IMR-90 (cell line): ENCODE measurements at regions of chr17 and their contacts with region 1.

Region 1: DNA sequence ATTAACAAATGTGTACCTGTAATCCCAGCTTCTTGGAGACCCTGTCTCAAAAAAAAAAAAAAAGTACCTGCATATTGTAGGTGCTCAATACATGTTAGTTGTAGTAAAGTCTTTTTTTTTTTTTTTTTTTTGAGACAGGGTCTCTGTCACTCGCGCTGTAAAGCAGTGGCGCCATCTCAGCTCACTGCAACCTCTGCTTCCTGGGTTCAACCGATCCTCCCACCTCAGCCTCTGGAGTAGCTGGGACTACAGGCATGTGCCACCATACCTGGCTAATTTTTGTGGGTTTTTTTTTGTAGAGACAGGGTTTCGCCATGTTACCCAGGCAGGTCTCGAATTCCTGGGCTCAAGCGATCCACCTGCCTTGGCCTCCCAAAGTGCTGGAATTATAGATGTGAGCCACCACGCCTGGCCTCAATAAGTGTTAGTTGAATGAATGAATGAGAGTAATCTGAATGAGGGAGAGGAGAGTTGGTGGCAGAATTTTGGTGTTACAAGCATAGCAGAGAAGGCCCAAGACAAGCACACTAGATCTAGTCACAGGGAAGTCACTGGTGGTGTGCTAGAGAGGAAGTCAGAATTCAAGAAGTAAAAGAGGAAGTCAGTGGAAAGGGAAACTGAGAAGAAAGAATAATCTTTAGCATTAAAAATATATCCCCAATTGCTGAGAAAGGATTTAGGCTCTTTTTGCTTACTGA is 9.4 kb upstream of the MYL4 start:
- DNase-seq: no peak
- ATAC-seq: no peak
- H3K4me3 ChIP-seq: no peak overlapping the region
- H3K27ac ChIP-seq: no peak overlapping the region
- H3K4me1 ChIP-seq: peaks cover 5% of the 10 kb centered on the region
- H3K27me3 ChIP-seq: no peaks in the 10 kb centered on the region
- CTCF ChIP-seq: no peak
- POLR2A ChIP-seq: no peak
- RAD21 ChIP-seq: no peak

Region 2: GRCh38 chr17:47210779-47211178 is 11.0 kb after region 1 on chr17:
- CTCF ChIA-PET with region 1: no interaction called
- POLR2A ChIA-PET with region 1: no interaction called
- dilution Hi-C with region 1: no loop called
- in situ Hi-C with region 1: no loop called
- intact Hi-C with region 1: loop called (anchors 1 kb)
- DNase-seq: no peak
- ATAC-seq: no peak
- H3K4me3 ChIP-seq: no peak overlapping the region
- H3K27ac ChIP-seq: no peak overlapping the region
- H3K4me1 ChIP-seq: peaks cover 10% of the 10 kb centered on the region
- H3K27me3 ChIP-seq: peaks cover 8% of the 10 kb centered on the region
- CTCF ChIP-seq: no peak
- POLR2A ChIP-seq: no peak
- RAD21 ChIP-seq: no peak